ENCODE measurements at regions of chr2 and their contacts with region 1.

Region 1: GRCh38 chr2:200373973-200374416 is 67.5 kb downstream of the SPATS2L start:
- DNase-seq: peak; percentile 57
- H3K4me3 Mint-ChIP-seq: peak overlapping the region; percentile 64
- H3K27ac Mint-ChIP-seq: peak overlapping the region; percentile 63
- H3K4me1 Mint-ChIP-seq: peaks cover 40% of the 10 kb centered on the region
- H3K27me3 Mint-ChIP-seq: no peaks in the 10 kb centered on the region

Region 2: DNA sequence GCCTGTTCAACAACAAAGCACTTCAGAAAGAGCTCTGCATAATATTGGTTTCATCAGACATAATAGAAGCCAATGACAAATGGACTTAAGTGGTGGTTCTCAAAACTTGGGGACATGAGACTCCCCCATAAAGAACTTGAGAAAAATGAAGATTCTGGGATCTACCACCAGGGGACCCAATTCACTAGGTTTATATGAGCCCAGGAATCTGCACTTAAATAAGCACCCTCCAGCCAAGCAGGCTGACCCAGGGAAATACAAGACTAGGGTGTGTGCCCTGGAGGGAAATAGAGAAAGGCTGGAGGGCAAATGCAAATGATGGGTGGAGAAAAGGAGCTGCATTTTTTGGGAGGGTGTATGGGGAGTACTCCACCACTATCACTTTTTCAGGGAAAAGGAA is 968.8 kb before region 1 on chr2:
- CTCF ChIA-PET with region 1: no interaction called
- POLR2A ChIA-PET with region 1: no interaction called
- intact Hi-C with region 1: no loop called
- DNase-seq: no peak
- H3K4me3 Mint-ChIP-seq: no peak overlapping the region
- H3K27ac Mint-ChIP-seq: no peak overlapping the region
- H3K4me1 Mint-ChIP-seq: no peaks in the 10 kb centered on the region
- H3K27me3 Mint-ChIP-seq: peaks cover 18% of the 10 kb centered on the region

Region 3: GRCh38 chr2:200056105-200056504 is 317.9 kb before region 1 on chr2:
- CTCF ChIA-PET with region 1: no interaction called
- POLR2A ChIA-PET with region 1: no interaction called
- intact Hi-C with region 1: no loop called
- DNase-seq: no peak
- H3K4me3 Mint-ChIP-seq: no peak overlapping the region
- H3K27ac Mint-ChIP-seq: no peak overlapping the region
- H3K4me1 Mint-ChIP-seq: no peaks in the 10 kb centered on the region
- H3K27me3 Mint-ChIP-seq: peaks cover 13% of the 10 kb centered on the region

Region 4: GRCh38 chr2:200306196-200306930 is 67.6 kb before region 1 on chr2 and contains the start of gene SPATS2L:
- CTCF ChIA-PET with region 1: interaction called, 3 read pairs
- POLR2A ChIA-PET with region 1: interaction called, 3 read pairs
- intact Hi-C with region 1: loop called (anchors 2 kb)
- DNase-seq: peak; percentile 75
- H3K4me3 Mint-ChIP-seq: peak within 1 kb of the TSS; percentile 82
- H3K27ac Mint-ChIP-seq: peak within 1 kb of the TSS; percentile 52
- H3K4me1 Mint-ChIP-seq: peaks cover 25% of the 10 kb centered on the region
- H3K27me3 Mint-ChIP-seq: peaks cover 4% of the 10 kb centered on the region
- total RNA-seq, gene SPATS2L: 25.4 to 28.8 TPM

Region 5: DNA sequence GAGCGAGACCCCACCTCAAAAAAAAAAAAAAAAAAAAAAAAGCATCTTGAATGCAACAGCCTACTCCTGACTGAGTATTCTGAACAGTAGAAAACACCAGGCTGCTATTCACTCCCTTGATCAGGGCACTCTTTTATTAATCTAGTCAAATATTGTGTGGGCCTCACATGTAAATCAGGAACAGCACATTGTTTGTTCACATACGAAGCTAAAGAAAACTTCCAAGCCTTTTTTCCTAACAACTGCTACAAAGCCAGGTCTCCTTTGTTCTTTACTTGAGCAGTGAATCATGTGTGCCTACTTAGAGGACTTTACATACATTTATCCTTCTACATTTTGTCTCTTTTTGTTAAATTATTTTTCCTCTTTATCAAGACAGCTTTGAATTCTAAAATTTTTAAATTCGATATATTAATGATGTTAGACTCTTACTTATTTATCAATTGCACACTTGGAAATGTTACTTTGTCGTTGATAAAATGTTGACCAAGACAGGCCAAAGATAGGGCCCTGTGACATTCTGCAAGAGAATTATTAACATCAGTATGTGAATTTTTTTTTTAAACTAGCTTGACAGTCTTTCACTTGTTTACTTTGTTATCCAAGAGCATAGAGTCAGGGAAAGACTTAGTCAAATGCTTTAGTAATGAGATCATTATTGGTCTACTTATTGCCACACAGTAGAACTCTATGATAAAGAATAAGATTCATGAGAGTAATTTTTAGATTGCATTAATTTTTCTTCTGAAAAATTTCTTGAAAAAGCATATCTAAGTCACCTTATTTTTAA is 54.3 kb before region 1 on chr2:
- CTCF ChIA-PET with region 1: no interaction called
- POLR2A ChIA-PET with region 1: no interaction called
- intact Hi-C with region 1: loop called (anchors 5 kb)
- DNase-seq: no peak
- H3K4me3 Mint-ChIP-seq: no peak overlapping the region
- H3K27ac Mint-ChIP-seq: no peak overlapping the region
- H3K4me1 Mint-ChIP-seq: peaks cover 35% of the 10 kb centered on the region
- H3K27me3 Mint-ChIP-seq: no peaks in the 10 kb centered on the region

Region 6: GRCh38 chr2:200405599-200406298 is 31.8 kb after region 1 on chr2:
- CTCF ChIA-PET with region 1: no interaction called
- POLR2A ChIA-PET with region 1: no interaction called
- intact Hi-C with region 1: loop called (anchors 2 kb)
- DNase-seq: no peak
- H3K4me3 Mint-ChIP-seq: no peak overlapping the region
- H3K27ac Mint-ChIP-seq: peak overlapping the region; percentile 43
- H3K4me1 Mint-ChIP-seq: peaks cover 33% of the 10 kb centered on the region
- H3K27me3 Mint-ChIP-seq: no peaks in the 10 kb centered on the region